ENCODE measurements at regions of chr1 and their contacts with region 1.

Region 1: DNA sequence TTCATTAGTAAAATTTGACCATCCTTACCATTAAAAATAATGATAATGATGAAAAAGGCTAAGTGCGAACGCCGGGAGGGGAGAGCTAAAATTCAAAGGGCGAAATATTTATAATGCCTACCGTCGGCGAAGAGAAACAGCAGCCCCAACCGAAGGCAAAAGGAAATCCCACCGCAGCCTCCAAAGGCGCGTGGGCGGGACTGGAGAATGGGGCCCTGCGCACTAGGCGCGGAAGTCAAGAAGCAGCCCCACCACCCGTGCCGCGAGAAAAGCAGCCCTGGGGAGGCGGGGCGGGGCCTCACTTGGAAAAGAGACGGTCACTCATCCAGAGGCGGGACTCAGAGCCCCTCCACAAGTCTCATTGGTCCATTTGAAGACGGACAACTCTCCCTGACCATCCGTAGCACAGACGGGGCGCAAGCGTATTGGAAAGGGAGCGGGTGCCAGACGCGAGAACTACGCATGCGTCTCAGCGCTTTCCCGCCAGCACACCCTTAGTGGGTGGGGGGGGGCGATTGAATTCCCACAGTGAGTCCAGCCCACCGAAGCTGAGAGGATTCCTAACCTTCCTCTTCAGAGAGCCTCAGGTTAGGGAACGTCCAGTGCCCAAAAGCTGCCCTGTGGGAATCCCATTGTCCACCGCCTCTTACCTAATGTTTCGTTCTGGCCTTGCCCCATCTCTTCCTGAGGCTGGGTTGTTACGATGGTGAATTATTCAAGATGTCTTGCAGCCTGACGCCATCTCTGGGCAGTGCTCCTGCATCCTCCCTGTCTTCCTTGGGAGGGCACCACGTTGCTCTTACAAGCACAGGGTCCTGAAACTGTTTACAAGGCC is 19.0 kb downstream of the MTX1 start:
- DNase-seq: peak; percentile 97 to 99 (median 99)
- H3K4me3 ChIP-seq: peak overlapping the region; percentile 48 to 97 (median 74)
- H3K27ac ChIP-seq: peak overlapping the region; percentile 75 to 97 (median 93)
- H3K27me3 ChIP-seq: no peaks in the 10 kb centered on the region
- CTCF ChIP-seq: peak in 18 of 56 donors; percentile 4 to 39 (median 18)

Region 2: GRCh38 chr1:155176544-155177071 is 50.9 kb before region 1 on chr1:
- intact Hi-C with region 1: loop called in 1 of 2 experiments (anchors 5 kb)
- DNase-seq: peak; percentile 78 to 92 (median 87)
- H3K4me3 ChIP-seq: peak overlapping the region in 28 of 59 donors; percentile 6 to 95 (median 88)
- H3K27ac ChIP-seq: peak overlapping the region in 30 of 59 donors; percentile 3 to 98 (median 88)
- H3K27me3 ChIP-seq: no peaks in the 10 kb centered on the region
- CTCF ChIP-seq: peak; percentile 90 to 99 (median 96)

Region 3: GRCh38 chr1:155208541-155209311 is 18.8 kb before region 1 on chr1 and contains the start of gene MTX1:
- intact Hi-C with region 1: loop called in 1 of 2 experiments (anchors 2 kb)
- DNase-seq: peak; percentile 78 to 90 (median 87)
- H3K4me3 ChIP-seq: peak within 1 kb of the TSS; percentile 67 to 99 (median 93)
- H3K27ac ChIP-seq: peak within 1 kb of the TSS; percentile 65 to 100 (median 98)
- H3K27me3 ChIP-seq: no peaks in the 10 kb centered on the region
- CTCF ChIP-seq: peak in 11 of 56 donors; percentile 0 to 28 (median 11)
- total RNA-seq, gene MTX1: 13.5 to 26.7 (median 20.0) TPM